Right lobe of liver (tissue), 6 donors: ENCODE measurements at regions of chr6 and their contacts with region 1.

Region 1: GRCh38 chr6:157867155-157867559 is 44.1 kb downstream of the SNX9 start:
- DNase-seq: no peak
- ATAC-seq: peak in 3 of 4 donors; percentile 22 to 44 (median 41)
- H3K4me3 ChIP-seq: no peak overlapping the region
- H3K27ac ChIP-seq: no peak overlapping the region
- H3K4me1 ChIP-seq: no peaks in the 10 kb centered on the region
- H3K27me3 ChIP-seq: no peaks in the 10 kb centered on the region
- CTCF ChIP-seq: no peak
- POLR2A ChIP-seq: no peak

Region 2: DNA sequence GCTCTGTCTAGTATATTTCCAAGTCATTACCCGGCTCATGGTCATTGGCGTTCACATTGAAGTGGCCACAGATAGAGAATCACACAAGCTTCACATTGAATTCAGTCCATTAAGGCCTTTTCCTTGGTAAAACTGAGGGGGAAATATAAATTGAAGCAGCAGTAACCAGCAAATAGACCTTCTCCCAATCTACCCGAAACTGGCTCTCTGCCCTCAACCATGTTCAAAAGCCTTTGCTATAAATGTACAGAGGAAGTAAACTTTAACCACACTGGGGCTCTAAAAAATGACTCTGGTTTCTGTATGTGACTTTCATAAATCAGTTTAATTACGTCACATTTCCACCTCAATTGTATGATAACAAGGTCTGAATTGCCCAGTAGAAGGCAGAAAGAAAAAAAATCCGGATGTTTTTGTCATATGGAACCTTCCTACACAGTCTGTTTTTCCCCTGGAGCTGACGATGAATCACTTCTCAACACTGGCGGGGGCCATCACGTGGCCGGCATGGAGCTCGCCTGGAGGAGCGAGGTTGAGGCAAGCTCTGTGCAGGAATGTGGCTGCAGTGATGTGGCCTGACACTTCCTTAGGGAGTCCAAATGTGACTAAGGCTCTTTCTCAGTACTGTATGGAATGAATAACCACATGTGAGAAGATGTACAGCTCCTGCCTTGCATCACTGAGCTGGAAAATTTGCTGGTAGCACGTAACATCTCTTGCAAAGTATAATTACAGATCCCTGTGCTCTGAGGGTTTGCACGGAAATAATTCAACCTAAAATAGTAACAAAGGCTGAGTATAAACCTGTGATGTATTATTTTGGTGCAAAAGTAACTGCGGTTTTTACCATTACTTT is 102.8 kb before region 1 on chr6:
- intact Hi-C with region 1: loop called (anchors 5 to 10 kb)
- DNase-seq: peak in 2 of 3 donors; percentile 83
- ATAC-seq: peak; percentile 68 to 81 (median 72)
- H3K4me3 ChIP-seq: no peak overlapping the region
- H3K27ac ChIP-seq: peak overlapping the region; percentile 29 to 75 (median 71)
- H3K4me1 ChIP-seq: peaks cover 0 to 6% (median 4%) of the 10 kb centered on the region in 4 donors
- H3K27me3 ChIP-seq: no peaks in the 10 kb centered on the region
- CTCF ChIP-seq: no peak
- POLR2A ChIP-seq: peak; percentile 16